GM12878 (cell line): ENCODE measurements at regions of chr9 and their contacts with region 1.

Region 1: GRCh38 chr9:19230356-19231125 is at the start of gene DENND4C:
- DNase-seq: peak; percentile 66
- ATAC-seq: peak; percentile 90
- H3K4me3 ChIP-seq: peak within 1 kb of the TSS; percentile 79
- H3K27ac ChIP-seq: peak within 1 kb of the TSS; percentile 94
- H3K4me1 ChIP-seq: no peaks in the 10 kb centered on the region; the same call in 1 of the 2 replicates
- H3K27me3 ChIP-seq: no peaks in the 10 kb centered on the region
- CTCF ChIP-seq: peak in 1 of 3 experiments; percentile 24; a peak in 1 of 6 replicates
- EP300 ChIP-seq: peak; percentile 58 to 87
- POLR2A ChIP-seq: peak; percentile 92
- RAD21 ChIP-seq: no peak
- polyA plus RNA-seq, gene DENND4C: 8.2 to 10.1 TPM

Region 2: DNA sequence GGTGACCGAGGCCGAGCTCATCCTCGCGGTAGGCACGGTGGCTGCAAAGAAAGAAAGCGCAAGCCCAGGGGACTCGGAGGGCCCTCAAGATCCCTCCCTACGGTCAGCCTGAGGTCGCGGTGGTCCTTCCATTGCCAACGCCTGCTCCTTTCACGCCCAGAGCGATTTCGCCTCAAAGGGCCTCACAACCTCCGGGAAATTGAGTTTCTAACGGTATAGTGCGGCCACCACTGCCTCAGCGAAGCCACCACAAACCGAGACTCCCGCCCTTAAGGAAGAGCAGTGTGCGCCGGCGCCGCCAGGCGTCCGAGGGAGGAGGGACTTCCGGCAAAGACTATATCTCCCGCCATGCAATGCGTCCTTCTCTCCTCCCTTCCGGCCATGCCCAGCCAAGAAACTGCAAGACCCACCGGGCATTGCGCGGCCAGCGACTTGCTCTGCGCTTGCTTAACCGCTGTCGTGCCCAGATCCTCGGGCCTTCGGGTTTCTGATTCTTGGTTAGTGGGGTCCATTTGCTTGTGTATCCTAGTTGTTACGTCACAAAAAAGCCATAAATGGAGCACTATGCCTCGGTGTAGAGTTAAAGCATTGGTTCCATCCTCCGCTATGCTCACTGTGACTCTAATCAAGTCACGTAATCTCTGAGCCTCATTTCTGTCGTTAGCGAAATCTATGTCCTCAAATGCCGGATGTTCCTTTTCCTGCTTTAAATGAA is 127.8 kb before region 1 on chr9 and contains the start of gene HAUS6:
- CTCF ChIA-PET with region 1: no interaction called
- POLR2A ChIA-PET with region 1: no interaction called
- RAD21 ChIA-PET with region 1: no interaction called
- SMC1A ChIA-PET with region 1: interaction called, 4 read pairs
- in situ Hi-C with region 1: no loop called
- intact Hi-C with region 1: loop called (anchors 2 kb)
- DNase-seq: peak; percentile 89
- ATAC-seq: peak; percentile 98
- H3K4me3 ChIP-seq: peak within 1 kb of the TSS; percentile 80
- H3K27ac ChIP-seq: peak within 1 kb of the TSS; percentile 72
- H3K4me1 ChIP-seq: peaks cover 9% of the 10 kb centered on the region; the same call in 1 of the 2 replicates
- H3K27me3 ChIP-seq: no peaks in the 10 kb centered on the region
- CTCF ChIP-seq: peak in 2 of 3 experiments; percentile 10 to 44; a peak in 1 of 6 replicates
- EP300 ChIP-seq: no peak
- POLR2A ChIP-seq: peak; percentile 80
- RAD21 ChIP-seq: no peak
- polyA plus RNA-seq, gene HAUS6: 7.1 to 8.4 TPM

Region 3: GRCh38 chr9:19137282-19137681 is 93.3 kb before region 1 on chr9:
- CTCF ChIA-PET with region 1: no interaction called
- POLR2A ChIA-PET with region 1: no interaction called
- RAD21 ChIA-PET with region 1: no interaction called
- SMC1A ChIA-PET with region 1: no interaction called
- in situ Hi-C with region 1: no loop called
- intact Hi-C with region 1: no loop called
- DNase-seq: no peak
- ATAC-seq: no peak
- H3K4me3 ChIP-seq: no peak overlapping the region
- H3K27ac ChIP-seq: no peak overlapping the region
- H3K4me1 ChIP-seq: no peaks in the 10 kb centered on the region; the same call in 1 of the 2 replicates
- H3K27me3 ChIP-seq: no peaks in the 10 kb centered on the region
- CTCF ChIP-seq: no peak
- EP300 ChIP-seq: no peak
- POLR2A ChIP-seq: no peak
- RAD21 ChIP-seq: no peak

Region 4: DNA sequence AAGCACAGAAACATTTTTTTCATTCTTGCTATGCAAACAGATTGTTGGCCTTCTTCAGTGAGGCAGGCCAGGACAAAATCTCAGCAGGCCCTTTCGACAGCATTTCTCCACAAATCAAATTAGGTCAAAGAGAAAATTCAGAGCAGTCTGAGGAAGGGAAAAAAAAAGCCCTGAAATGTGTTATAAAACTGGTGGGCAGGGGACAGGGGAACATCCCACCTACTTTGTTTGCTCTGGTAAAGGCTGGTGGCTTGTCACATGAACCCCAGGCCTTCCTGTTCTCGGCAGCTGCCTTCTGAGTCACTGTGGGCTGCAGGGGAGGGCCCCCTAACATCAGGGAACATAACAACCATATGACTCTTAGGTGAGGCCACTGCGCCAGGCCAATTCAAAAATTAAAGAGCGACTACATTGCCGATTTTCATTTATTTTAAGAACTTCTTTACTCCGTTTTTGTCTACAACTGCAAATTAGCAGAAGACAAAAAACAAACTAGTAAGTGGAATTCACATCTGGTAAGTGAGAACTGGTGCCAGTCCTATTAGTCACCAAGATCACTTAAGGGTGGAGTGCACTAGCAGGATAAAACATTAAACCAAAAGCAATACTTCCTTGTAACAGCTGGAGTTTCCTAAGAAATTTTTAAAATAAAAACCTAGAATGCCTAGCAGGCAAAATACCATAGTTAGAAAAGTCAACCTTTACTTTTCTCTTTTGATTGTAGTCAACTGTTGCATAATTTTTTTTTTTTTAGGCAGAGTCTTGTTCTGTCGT is 46.2 kb before region 1 on chr9:
- CTCF ChIA-PET with region 1: interaction called, 5 read pairs
- POLR2A ChIA-PET with region 1: interaction called, 5 read pairs
- RAD21 ChIA-PET with region 1: interaction called, 13 read pairs
- SMC1A ChIA-PET with region 1: interaction called, 37 read pairs
- in situ Hi-C with region 1: no loop called
- intact Hi-C with region 1: loop called (anchors 2 kb)
- DNase-seq: peak; percentile 46
- ATAC-seq: peak; percentile 99
- H3K4me3 ChIP-seq: no peak overlapping the region
- H3K27ac ChIP-seq: peak overlapping the region; percentile 59; the same call in 1 of the 2 replicates
- H3K4me1 ChIP-seq: 0 out of 2 replicates have a peak, but pooled peaks cover 5% of the 10 kb centered on the region
- H3K27me3 ChIP-seq: no peaks in the 10 kb centered on the region
- CTCF ChIP-seq: 0 out of 6 replicates have a peak, but pooled peaks of 1 of the 3 experiments have one; percentile 0
- EP300 ChIP-seq: peak; percentile 72 to 84; a peak in 3 of 4 replicates
- POLR2A ChIP-seq: peak; percentile 37; the same call in 1 of the 2 replicates
- RAD21 ChIP-seq: peak; percentile 19; the same call in 1 of the 2 replicates

Region 5: GRCh38 chr9:19209188-19209587 is 21.4 kb before region 1 on chr9:
- CTCF ChIA-PET with region 1: no interaction called
- POLR2A ChIA-PET with region 1: no interaction called
- RAD21 ChIA-PET with region 1: no interaction called
- SMC1A ChIA-PET with region 1: no interaction called
- in situ Hi-C with region 1: no loop called
- intact Hi-C with region 1: no loop called
- DNase-seq: no peak
- ATAC-seq: no peak
- H3K4me3 ChIP-seq: no peak overlapping the region
- H3K27ac ChIP-seq: no peak overlapping the region
- H3K4me1 ChIP-seq: no peaks in the 10 kb centered on the region
- H3K27me3 ChIP-seq: no peaks in the 10 kb centered on the region
- CTCF ChIP-seq: no peak
- EP300 ChIP-seq: no peak
- POLR2A ChIP-seq: no peak
- RAD21 ChIP-seq: no peak

Region 6: DNA sequence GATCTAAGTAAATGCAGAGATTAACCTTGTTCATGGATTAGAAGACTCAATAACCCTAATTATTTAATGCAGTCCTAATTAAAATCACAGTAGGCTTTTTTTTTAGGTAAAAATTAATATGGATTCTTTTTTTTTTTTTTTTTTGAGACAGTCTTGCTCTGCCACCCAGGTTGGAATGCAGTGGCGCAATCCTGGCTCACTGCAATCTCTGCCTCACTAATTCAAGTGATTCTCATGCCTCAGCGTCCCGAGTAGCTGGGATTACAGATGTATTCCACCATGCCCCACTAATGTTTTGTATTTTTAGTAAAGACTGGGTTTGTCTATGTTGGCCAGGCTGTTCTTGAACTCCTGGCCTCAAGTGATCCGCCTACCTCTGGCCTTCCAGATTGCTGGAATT is 40.5 kb after region 1 on chr9:
- CTCF ChIA-PET with region 1: no interaction called
- POLR2A ChIA-PET with region 1: interaction called, 3 read pairs
- RAD21 ChIA-PET with region 1: interaction called, 3 read pairs
- SMC1A ChIA-PET with region 1: interaction called, 4 read pairs
- in situ Hi-C with region 1: no loop called
- intact Hi-C with region 1: loop called (anchors 5 kb)
- DNase-seq: no peak
- ATAC-seq: no peak
- H3K4me3 ChIP-seq: no peak overlapping the region
- H3K27ac ChIP-seq: no peak overlapping the region
- H3K4me1 ChIP-seq: no peaks in the 10 kb centered on the region; the same call in 1 of the 2 replicates
- H3K27me3 ChIP-seq: no peaks in the 10 kb centered on the region
- CTCF ChIP-seq: no peak
- EP300 ChIP-seq: no peak
- POLR2A ChIP-seq: no peak
- RAD21 ChIP-seq: no peak

Region 7: GRCh38 chr9:19379697-19380046 is 149.1 kb after region 1 on chr9:
- CTCF ChIA-PET with region 1: interaction called, 4 read pairs
- POLR2A ChIA-PET with region 1: interaction called, 4 read pairs
- RAD21 ChIA-PET with region 1: interaction called, 6 read pairs
- SMC1A ChIA-PET with region 1: interaction called, 3 read pairs
- in situ Hi-C with region 1: no loop called
- intact Hi-C with region 1: loop called (anchors 2 kb)
- DNase-seq: no peak
- ATAC-seq: peak; percentile 45
- H3K4me3 ChIP-seq: peak overlapping the region; percentile 82
- H3K27ac ChIP-seq: peak overlapping the region; percentile 88
- H3K4me1 ChIP-seq: peaks cover 5% of the 10 kb centered on the region
- H3K27me3 ChIP-seq: no peaks in the 10 kb centered on the region
- CTCF ChIP-seq: no peak
- EP300 ChIP-seq: no peak
- POLR2A ChIP-seq: no peak
- RAD21 ChIP-seq: no peak

Region 8: DNA sequence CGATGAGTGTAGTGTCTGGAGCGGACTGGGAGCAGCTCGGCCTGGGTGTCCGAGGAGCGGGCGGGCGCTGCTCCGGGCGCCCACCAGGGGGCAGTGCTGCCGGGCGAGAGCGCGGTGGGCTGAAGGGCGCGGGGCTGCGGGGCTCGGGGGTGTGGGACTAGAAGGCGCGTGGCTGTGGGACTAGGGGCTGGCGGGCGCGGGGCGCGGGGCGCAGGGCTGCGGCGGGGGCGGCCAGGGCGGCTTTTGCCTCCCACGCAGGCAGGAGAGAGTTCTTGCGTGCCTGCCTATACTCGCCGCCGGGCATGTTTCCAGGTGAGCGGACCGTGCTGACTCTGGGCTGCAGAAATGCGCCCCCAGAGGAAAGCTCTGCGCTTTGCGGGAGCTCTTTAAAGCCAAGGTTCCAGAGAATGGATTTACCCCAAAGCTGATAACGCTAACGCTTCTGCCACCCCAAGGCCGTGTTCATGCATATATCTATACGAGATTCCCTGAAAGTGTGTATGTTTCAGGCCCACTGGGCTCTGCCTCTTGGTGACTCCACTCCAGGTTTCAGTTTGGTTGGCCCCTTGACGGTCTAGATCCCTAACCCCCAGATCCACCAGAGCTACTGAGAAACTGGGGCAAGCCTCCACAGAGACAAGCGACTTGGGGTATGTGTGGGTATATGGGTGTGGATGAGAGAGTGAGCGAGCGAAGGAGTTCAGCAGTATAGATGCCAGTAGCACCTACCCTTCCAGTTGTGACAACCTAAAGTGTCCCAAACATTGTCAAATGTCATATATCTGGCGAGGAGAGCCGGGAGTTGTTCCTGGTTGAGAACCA is 234.4 kb after region 1 on chr9:
- CTCF ChIA-PET with region 1: interaction called, 14 read pairs
- POLR2A ChIA-PET with region 1: no interaction called
- RAD21 ChIA-PET with region 1: no interaction called
- SMC1A ChIA-PET with region 1: no interaction called
- in situ Hi-C with region 1: no loop called
- intact Hi-C with region 1: no loop called
- DNase-seq: no peak
- ATAC-seq: peak; percentile 97
- H3K4me3 ChIP-seq: peak overlapping the region; percentile 69; the same call in 1 of the 2 replicates
- H3K27ac ChIP-seq: no peak overlapping the region
- H3K4me1 ChIP-seq: 0 out of 2 replicates have a peak, but pooled peaks cover 3% of the 10 kb centered on the region
- H3K27me3 ChIP-seq: no peaks in the 10 kb centered on the region
- CTCF ChIP-seq: peak; percentile 67 to 73 (median 69)
- EP300 ChIP-seq: no peak
- POLR2A ChIP-seq: no peak
- RAD21 ChIP-seq: 0 out of 2 replicates have a peak, but pooled peaks have one; percentile 16

Region 9: GRCh38 chr9:19577411-19577810 is 346.9 kb after region 1 on chr9:
- CTCF ChIA-PET with region 1: no interaction called
- POLR2A ChIA-PET with region 1: no interaction called
- RAD21 ChIA-PET with region 1: no interaction called
- SMC1A ChIA-PET with region 1: no interaction called
- in situ Hi-C with region 1: no loop called
- intact Hi-C with region 1: no loop called
- DNase-seq: no peak
- ATAC-seq: no peak
- H3K4me3 ChIP-seq: no peak overlapping the region
- H3K27ac ChIP-seq: no peak overlapping the region
- H3K4me1 ChIP-seq: no peaks in the 10 kb centered on the region
- H3K27me3 ChIP-seq: no peaks in the 10 kb centered on the region
- CTCF ChIP-seq: no peak
- EP300 ChIP-seq: no peak
- POLR2A ChIP-seq: no peak
- RAD21 ChIP-seq: no peak